B cell (primary cell): ENCODE measurements at regions of chr5 and their contacts with region 1.

Region 1: GRCh38 chr5:110738812-110739651 is at the start of gene SLC25A46:
- DNase-seq: peak; percentile 96
- ATAC-seq: peak; percentile 82
- H3K4me3 ChIP-seq: peak within 1 kb of the TSS; percentile 72 to 98 (median 92)
- H3K4me3 Mint-ChIP-seq: peak within 1 kb of the TSS; percentile 100
- H3K27ac ChIP-seq: peak within 1 kb of the TSS; percentile 83 to 97
- H3K27ac Mint-ChIP-seq: peak within 1 kb of the TSS; percentile 99
- H3K4me1 ChIP-seq: peaks cover 14 to 17% of the 10 kb centered on the region in 2 donors
- H3K4me1 Mint-ChIP-seq: peaks cover 29% of the 10 kb centered on the region
- H3K27me3 ChIP-seq: peaks cover 0 to 4% (median 0%) of the 10 kb centered on the region in 4 experiments
- H3K27me3 Mint-ChIP-seq: peaks cover 10% of the 10 kb centered on the region
- CTCF ChIP-seq: no peak
- total RNA-seq, gene SLC25A46: 36.9 and 38.0 TPM in 2 replicates

Region 2: DNA sequence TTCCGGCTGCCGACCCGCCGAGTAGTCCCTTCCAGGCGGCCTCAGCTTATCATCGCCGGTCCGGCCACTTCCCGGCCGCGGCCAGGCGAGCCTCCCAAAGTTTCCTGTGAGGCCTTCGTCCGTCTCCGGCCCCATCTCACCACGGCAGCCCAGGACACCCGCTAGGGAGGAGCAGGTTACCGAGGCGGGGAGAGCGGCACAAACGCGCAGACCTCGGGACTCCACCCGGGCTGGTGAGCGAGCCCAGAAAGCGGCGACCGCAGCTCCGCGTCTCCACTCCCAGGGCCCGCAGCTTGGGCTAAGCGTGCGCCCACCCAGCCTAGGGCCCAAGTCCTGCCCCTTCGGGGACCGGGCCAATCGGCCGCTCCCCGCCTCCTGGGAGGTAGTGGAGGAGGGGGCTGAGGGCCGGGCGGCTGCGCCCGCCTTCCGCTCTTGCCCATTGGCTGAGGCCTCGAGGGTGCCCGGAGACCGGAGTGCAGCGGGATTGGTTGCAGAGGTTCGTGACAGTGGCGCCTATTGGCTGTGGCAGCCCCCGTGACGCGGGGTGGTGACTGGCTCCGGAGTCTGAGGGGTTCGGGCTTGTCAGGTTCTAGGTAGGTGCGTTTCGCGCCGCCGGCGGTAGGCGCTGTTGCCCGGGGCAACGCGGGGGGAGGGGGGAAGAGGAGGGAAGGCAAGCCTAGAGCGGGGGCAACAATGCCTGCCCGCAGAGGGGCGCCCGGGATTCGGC is 1990.5 kb before region 1 on chr5:
- CTCF ChIA-PET with region 1: no interaction called
- POLR2A ChIA-PET with region 1: no interaction called
- intact Hi-C with region 1: loop called (anchors 2 kb)
- DNase-seq: peak; percentile 98
- ATAC-seq: peak; percentile 91
- H3K4me3 ChIP-seq: peak overlapping the region; percentile 74 to 90 (median 83)
- H3K4me3 Mint-ChIP-seq: peak overlapping the region; percentile 92
- H3K27ac ChIP-seq: peak overlapping the region; percentile 91 to 94
- H3K27ac Mint-ChIP-seq: peak overlapping the region; percentile 86
- H3K4me1 ChIP-seq: peaks cover 14 to 17% of the 10 kb centered on the region in 2 donors
- H3K4me1 Mint-ChIP-seq: peaks cover 10% of the 10 kb centered on the region
- H3K27me3 ChIP-seq: no peaks in the 10 kb centered on the region
- H3K27me3 Mint-ChIP-seq: no peaks in the 10 kb centered on the region
- CTCF ChIP-seq: no peak

Region 3: GRCh38 chr5:110625376-110625999 is 113.5 kb before region 1 on chr5:
- CTCF ChIA-PET with region 1: no interaction called
- POLR2A ChIA-PET with region 1: no interaction called
- intact Hi-C with region 1: no loop called
- DNase-seq: peak; percentile 20
- ATAC-seq: no peak
- H3K4me3 ChIP-seq: no peak overlapping the region
- H3K4me3 Mint-ChIP-seq: no peak overlapping the region
- H3K27ac ChIP-seq: no peak overlapping the region
- H3K27ac Mint-ChIP-seq: no peak overlapping the region
- H3K4me1 ChIP-seq: no peaks in the 10 kb centered on the region
- H3K4me1 Mint-ChIP-seq: no peaks in the 10 kb centered on the region
- H3K27me3 ChIP-seq: no peaks in the 10 kb centered on the region
- H3K27me3 Mint-ChIP-seq: no peaks in the 10 kb centered on the region
- CTCF ChIP-seq: peak; percentile 83

Region 4: DNA sequence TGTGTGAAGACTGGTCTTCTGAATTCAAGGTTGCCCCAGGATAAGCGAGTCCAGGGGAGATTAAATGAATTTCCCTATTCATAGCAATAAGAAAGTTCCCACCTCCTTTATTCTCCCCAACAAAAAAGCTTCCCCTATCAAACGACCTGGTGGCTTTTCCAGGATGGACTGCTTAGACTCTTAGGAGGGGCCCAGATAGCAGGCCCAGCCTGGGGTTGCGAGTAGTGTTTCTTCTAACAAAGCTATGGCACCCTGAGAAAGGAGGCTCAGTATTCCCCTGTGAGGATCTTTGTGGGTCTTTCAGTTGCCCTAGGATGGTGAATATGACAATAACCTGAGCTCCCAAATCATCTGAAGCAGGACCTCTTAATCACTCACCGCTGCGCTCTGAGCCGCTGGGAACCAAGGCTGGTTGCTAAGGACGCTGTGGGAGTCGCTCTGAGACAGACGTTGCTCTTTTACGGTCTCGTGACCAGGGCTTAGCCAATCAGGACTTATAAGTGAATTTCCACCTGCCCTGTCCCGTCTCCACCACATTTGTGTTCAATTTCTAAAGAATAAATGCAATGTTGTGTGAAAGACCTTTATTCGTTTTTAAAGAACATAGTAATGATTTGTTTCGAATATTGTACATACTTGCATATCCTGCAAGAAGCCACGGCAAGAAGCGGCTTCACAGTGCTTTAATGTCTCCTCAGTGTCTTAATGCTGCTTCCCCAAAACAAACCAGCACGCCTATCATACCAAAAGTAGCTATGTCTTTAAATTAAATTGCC is 12.6 kb before region 1 on chr5 and contains the start of gene TMEM232:
- CTCF ChIA-PET with region 1: no interaction called
- POLR2A ChIA-PET with region 1: interaction called, 3 read pairs
- intact Hi-C with region 1: loop called (anchors 1 kb)
- DNase-seq: peak; percentile 81
- ATAC-seq: peak; percentile 98
- H3K4me3 ChIP-seq: peak within 1 kb of the TSS; percentile 36 to 65 (median 50)
- H3K4me3 Mint-ChIP-seq: peak within 1 kb of the TSS; percentile 90
- H3K27ac ChIP-seq: peak within 1 kb of the TSS in 1 of 2 donors; percentile 49
- H3K27ac Mint-ChIP-seq: peak within 1 kb of the TSS; percentile 77
- H3K4me1 ChIP-seq: peaks cover 0 to 4% of the 10 kb centered on the region in 2 donors
- H3K4me1 Mint-ChIP-seq: peaks cover 3% of the 10 kb centered on the region
- H3K27me3 ChIP-seq: no peaks in the 10 kb centered on the region
- H3K27me3 Mint-ChIP-seq: no peaks in the 10 kb centered on the region
- CTCF ChIP-seq: no peak
- total RNA-seq, gene TMEM232: 2.9 and 6.1 TPM in 2 replicates

Region 5: DNA sequence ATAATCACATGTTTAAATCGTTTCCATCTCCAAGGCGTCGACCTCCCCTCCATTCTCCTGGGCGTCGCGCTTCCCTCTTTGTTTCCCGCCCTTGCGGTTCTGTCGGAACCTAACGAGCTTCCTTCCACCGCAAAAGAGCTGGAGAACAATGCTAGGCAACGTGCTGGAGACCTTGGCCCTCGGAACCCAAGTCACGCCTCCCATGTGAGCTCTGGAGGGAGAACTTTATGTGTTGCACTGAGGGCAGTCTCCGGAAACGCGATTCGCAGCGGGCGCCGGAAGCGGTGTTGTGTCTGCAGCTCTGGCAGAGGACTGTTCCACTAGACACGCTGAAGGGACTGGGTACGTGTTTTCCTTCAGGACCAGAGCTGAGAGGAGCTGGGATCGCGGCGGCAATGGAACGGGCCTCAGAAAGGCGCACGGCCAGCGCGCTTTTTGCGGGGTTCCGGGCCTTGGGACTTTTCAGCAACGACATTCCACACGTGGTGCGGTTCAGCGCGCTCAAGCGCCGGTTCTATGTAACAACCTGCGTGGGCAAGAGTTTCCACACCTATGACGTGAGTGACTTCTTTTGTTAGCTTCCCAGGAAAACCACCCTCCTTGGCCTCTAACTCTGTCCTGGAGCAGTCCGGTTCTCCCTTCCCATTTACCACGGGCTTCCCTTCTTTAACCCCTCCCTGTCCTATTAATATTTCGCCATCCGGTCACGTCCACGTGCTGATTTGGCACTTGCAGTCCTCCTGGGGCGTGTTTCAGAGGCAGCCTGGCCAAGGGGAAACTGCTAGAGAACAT is 353.2 kb after region 1 on chr5 and contains the start of gene WDR36:
- CTCF ChIA-PET with region 1: interaction called, 4 read pairs
- POLR2A ChIA-PET with region 1: no interaction called
- intact Hi-C with region 1: loop called (anchors 1 kb)
- DNase-seq: peak; percentile 93
- ATAC-seq: peak; percentile 94
- H3K4me3 ChIP-seq: peak within 1 kb of the TSS; percentile 87 to 94 (median 91)
- H3K4me3 Mint-ChIP-seq: peak within 1 kb of the TSS; percentile 97
- H3K27ac ChIP-seq: peak within 1 kb of the TSS; percentile 70 to 73
- H3K27ac Mint-ChIP-seq: peak within 1 kb of the TSS; percentile 74
- H3K4me1 ChIP-seq: peaks cover 13 to 24% of the 10 kb centered on the region in 2 donors
- H3K4me1 Mint-ChIP-seq: peaks cover 25% of the 10 kb centered on the region
- H3K27me3 ChIP-seq: peaks cover 0 to 7% (median 3%) of the 10 kb centered on the region in 4 experiments
- H3K27me3 Mint-ChIP-seq: peaks cover 6% of the 10 kb centered on the region
- CTCF ChIP-seq: no peak
- total RNA-seq, gene WDR36: 33.9 and 35.2 TPM in 2 replicates

Region 6: DNA sequence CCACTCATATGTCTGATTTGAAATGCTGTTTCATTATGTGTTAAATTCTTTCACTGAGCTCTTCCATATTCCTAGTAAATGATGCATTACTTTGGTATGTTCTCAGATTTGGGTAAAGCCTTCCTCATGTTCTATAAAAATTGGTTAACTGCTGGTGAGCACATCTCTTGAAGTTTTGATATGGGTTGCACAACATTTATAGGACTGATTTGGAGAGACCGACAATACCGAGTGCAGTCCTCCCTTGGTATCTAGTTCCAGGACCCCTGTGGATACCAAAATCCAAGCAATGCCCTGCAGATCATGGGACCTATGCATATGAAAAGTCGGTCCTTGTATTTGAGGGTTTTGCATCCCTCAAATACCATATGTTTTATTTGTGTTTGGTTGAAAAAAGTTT is 390.9 kb after region 1 on chr5:
- CTCF ChIA-PET with region 1: no interaction called
- POLR2A ChIA-PET with region 1: no interaction called
- intact Hi-C with region 1: no loop called
- DNase-seq: no peak
- ATAC-seq: no peak
- H3K4me3 ChIP-seq: no peak overlapping the region
- H3K4me3 Mint-ChIP-seq: no peak overlapping the region
- H3K27ac ChIP-seq: no peak overlapping the region
- H3K27ac Mint-ChIP-seq: no peak overlapping the region
- H3K4me1 ChIP-seq: no peaks in the 10 kb centered on the region
- H3K4me1 Mint-ChIP-seq: no peaks in the 10 kb centered on the region
- H3K27me3 ChIP-seq: no peaks in the 10 kb centered on the region
- H3K27me3 Mint-ChIP-seq: no peaks in the 10 kb centered on the region
- CTCF ChIP-seq: no peak